CD4-positive, alpha-beta memory T cell (primary cell): ENCODE measurements at regions of chr19 and their contacts with region 1.

Region 1: DNA sequence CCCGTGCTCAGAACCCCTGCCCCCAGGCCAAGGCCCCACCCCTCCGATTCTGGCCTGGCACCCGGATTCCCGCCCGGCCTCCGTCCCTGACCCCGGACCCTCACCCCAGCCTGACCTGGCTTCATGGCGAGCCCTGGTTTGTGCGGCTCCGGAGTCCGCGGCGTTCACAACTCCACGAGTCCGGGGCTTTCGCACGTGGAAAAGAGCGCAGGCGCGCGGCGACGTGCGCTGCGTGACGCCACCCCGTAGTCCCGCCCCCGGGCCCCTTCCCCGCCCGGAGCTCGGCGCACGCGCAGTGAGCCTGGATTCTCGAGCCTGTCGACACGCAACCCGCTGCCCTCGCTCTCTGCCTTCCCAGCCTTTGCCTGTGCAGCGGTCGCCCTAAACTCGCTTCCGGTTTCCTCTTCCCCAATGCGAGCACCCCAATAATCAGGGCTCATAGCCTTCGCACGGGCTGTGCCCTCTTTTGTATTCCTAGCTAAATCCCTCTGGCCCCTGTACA is at the start of gene FBL:
- DNase-seq: peak; percentile 94 to 98 (median 96)
- H3K4me3 ChIP-seq: peak within 1 kb of the TSS; percentile 63 to 78
- H3K4me3 Mint-ChIP-seq: peak within 1 kb of the TSS; percentile 88 to 93 (median 92)
- H3K27ac ChIP-seq: peak within 1 kb of the TSS; percentile 86
- H3K27ac Mint-ChIP-seq: peak within 1 kb of the TSS; percentile 92 to 98 (median 97)
- H3K4me1 ChIP-seq: peaks cover 49% of the 10 kb centered on the region
- H3K4me1 Mint-ChIP-seq: peaks cover 38 to 62% (median 47%) of the 10 kb centered on the region in 4 donors
- H3K27me3 ChIP-seq: no peaks in the 10 kb centered on the region
- H3K27me3 Mint-ChIP-seq: no peaks in the 10 kb centered on the region
- total RNA-seq, gene FBL: 282 to 295 TPM

Region 2: DNA sequence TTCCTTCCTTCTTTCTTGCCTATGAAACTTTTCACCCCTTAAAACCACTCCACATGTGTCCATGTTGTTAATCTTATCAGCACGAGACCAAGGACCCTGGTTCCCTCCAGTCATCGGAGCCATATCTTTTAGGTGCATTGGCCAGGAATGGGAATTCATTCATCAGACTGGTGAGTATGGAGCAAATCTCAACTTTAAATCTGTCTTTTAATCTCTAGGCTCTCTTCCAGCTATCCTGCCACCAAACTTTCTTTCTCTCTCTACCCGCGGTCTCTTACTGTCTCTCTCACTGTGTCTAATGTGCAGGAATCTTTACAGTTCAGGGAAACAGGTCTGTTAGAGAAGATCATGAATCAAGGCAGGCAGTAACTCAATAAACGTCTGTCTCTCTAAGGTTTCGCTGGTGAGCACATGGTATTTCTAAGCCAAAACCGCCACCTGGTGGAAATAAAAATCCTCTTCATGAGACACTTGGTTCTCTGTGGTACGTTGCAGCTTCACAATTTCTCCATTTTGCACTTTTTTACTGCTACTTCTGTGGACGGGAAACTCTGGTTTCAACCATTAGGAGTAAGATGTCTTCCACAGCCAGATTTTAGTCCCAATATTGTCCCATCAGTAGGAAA is 174.4 kb before region 1 on chr19:
- CTCF ChIA-PET with region 1: interaction called, 6 read pairs
- POLR2A ChIA-PET with region 1: no interaction called
- intact Hi-C with region 1: loop called (anchors 5 kb)
- DNase-seq: peak; percentile 50 to 60 (median 59)
- H3K4me3 ChIP-seq: no peak overlapping the region
- H3K4me3 Mint-ChIP-seq: peak overlapping the region in 3 of 8 donors; percentile 5 to 20 (median 17)
- H3K27ac ChIP-seq: no peak overlapping the region
- H3K27ac Mint-ChIP-seq: peak overlapping the region in 1 of 7 donors; percentile 9
- H3K4me1 ChIP-seq: peaks cover 24% of the 10 kb centered on the region
- H3K4me1 Mint-ChIP-seq: peaks cover 5 to 33% (median 19%) of the 10 kb centered on the region in 4 donors
- H3K27me3 ChIP-seq: no peaks in the 10 kb centered on the region
- H3K27me3 Mint-ChIP-seq: peaks cover 6 to 10% of the 10 kb centered on the region in 2 donors

Region 3: GRCh38 chr19:39765091-39766076 is 80.8 kb before region 1 on chr19:
- CTCF ChIA-PET with region 1: interaction called, 43 read pairs
- POLR2A ChIA-PET with region 1: no interaction called
- intact Hi-C with region 1: loop called (anchors 1 kb)
- DNase-seq: peak in 3 of 5 donors; percentile 14 to 20 (median 16)
- H3K4me3 ChIP-seq: no peak overlapping the region
- H3K4me3 Mint-ChIP-seq: no peak overlapping the region
- H3K27ac ChIP-seq: no peak overlapping the region
- H3K27ac Mint-ChIP-seq: no peak overlapping the region
- H3K4me1 ChIP-seq: no peaks in the 10 kb centered on the region
- H3K4me1 Mint-ChIP-seq: peaks cover 0 to 1% (median 0%) of the 10 kb centered on the region in 4 donors
- H3K27me3 ChIP-seq: no peaks in the 10 kb centered on the region
- H3K27me3 Mint-ChIP-seq: peaks cover under 1 to 1% of the 10 kb centered on the region in 2 donors

Region 4: DNA sequence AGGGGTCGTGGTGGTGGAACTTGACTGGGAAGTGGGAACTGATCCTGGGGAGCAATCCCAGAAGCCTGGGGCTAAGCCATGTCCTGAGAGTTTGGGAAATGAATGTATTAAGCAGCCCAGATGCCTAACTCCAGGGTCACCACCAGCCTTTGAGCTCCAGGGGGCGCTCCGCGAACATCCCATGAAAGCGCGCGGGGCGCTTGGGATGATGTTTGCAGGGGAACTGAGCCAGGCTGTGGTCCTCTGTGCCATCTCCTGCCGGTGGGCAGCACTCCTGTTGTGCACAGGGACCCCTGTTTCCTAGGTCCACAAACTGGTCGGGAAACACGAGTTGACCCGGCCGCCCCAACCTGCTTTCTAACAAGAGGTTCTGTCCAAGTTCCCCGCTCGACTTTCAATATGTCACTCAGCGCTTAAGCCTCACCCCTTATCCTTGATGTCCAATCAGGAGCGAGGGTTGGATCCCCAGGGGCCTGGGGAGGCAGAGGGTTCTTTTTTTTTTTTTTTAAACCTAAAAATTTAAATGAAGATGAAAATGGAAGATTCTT is 53.2 kb before region 1 on chr19:
- CTCF ChIA-PET with region 1: interaction called, 168 read pairs
- POLR2A ChIA-PET with region 1: interaction called, 16 read pairs
- intact Hi-C with region 1: loop called (anchors 1 kb)
- DNase-seq: peak; percentile 67 to 78 (median 69)
- H3K4me3 ChIP-seq: peak overlapping the region; percentile 63 to 73
- H3K4me3 Mint-ChIP-seq: peak overlapping the region; percentile 71 to 85 (median 80)
- H3K27ac ChIP-seq: no peak overlapping the region
- H3K27ac Mint-ChIP-seq: peak overlapping the region in 2 of 7 donors; percentile 19 to 69
- H3K4me1 ChIP-seq: peaks cover 3% of the 10 kb centered on the region
- H3K4me1 Mint-ChIP-seq: peaks cover 0 to 5% (median 2%) of the 10 kb centered on the region in 4 donors
- H3K27me3 ChIP-seq: no peaks in the 10 kb centered on the region
- H3K27me3 Mint-ChIP-seq: peaks cover 0 to 9% of the 10 kb centered on the region in 2 donors

Region 5: DNA sequence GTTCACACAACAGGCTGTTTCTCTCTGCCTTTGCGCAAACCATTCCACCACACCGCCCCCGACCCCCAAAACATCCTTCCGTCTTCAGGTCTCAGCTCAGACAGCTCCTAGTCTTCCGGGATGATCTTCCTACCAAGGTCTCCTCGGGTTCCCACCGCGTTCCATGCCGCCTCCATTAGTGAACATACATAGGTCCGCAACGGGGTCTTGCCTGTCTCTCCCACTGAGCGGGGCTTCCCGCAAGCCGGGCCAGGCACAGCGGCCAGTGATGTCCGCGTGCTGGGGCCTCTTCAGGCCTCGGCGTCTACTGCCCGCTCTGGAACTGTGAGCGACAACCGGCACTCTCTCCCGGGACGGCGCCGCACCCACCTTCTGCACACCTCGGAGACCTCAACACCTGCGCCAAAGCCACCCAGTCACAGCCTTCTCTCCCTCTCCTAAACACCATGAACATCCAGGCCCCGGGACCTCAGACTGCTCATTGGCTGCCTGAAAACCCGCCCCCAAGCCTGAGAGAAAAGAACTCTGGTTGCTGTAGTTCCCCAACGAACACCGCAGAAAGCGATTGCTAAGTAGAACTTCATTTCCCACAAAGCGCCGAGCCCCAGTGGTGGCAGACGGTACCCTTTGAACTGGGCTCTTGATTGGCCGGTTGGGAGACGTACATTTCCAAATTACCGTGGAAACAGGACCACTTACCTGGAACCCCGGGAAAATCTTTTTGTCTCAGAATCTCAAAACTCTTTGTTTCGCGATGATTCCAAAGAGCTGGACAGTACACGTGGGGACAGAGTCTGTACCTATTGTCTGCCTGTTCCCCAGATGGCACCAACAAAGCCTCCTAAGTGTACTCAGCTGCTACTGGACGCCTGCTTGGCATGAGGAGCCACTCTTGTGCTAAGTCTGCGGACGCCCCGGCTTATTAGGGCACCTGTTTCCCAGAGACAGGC is 21.8 kb before region 1 on chr19:
- CTCF ChIA-PET with region 1: interaction called, 13 read pairs
- POLR2A ChIA-PET with region 1: interaction called, 9 read pairs
- intact Hi-C with region 1: loop called (anchors 1 kb)
- DNase-seq: peak; percentile 86 to 95 (median 88)
- H3K4me3 ChIP-seq: peak overlapping the region; percentile 67 to 85
- H3K4me3 Mint-ChIP-seq: no peak overlapping the region
- H3K27ac ChIP-seq: peak overlapping the region; percentile 60
- H3K27ac Mint-ChIP-seq: no peak overlapping the region
- H3K4me1 ChIP-seq: peaks cover 24% of the 10 kb centered on the region
- H3K4me1 Mint-ChIP-seq: peaks cover 7 to 16% (median 8%) of the 10 kb centered on the region in 4 donors
- H3K27me3 ChIP-seq: no peaks in the 10 kb centered on the region
- H3K27me3 Mint-ChIP-seq: no peaks in the 10 kb centered on the region

Region 6: GRCh38 chr19:39833464-39834286 is 12.6 kb before region 1 on chr19 and contains the start of gene DYRK1B:
- CTCF ChIA-PET with region 1: interaction called, 61 read pairs
- POLR2A ChIA-PET with region 1: interaction called, 96 read pairs
- intact Hi-C with region 1: loop called (anchors 1 kb)
- DNase-seq: peak; percentile 96 to 98 (median 98)
- H3K4me3 ChIP-seq: peak within 1 kb of the TSS; percentile 81 to 98
- H3K4me3 Mint-ChIP-seq: peak within 1 kb of the TSS; percentile 79 to 90 (median 86)
- H3K27ac ChIP-seq: peak within 1 kb of the TSS; percentile 91
- H3K27ac Mint-ChIP-seq: peak within 1 kb of the TSS; percentile 77 to 99 (median 96)
- H3K4me1 ChIP-seq: peaks cover 30% of the 10 kb centered on the region
- H3K4me1 Mint-ChIP-seq: peaks cover 24 to 39% (median 31%) of the 10 kb centered on the region in 4 donors
- H3K27me3 ChIP-seq: no peaks in the 10 kb centered on the region
- H3K27me3 Mint-ChIP-seq: no peaks in the 10 kb centered on the region
- total RNA-seq, gene DYRK1B: 28.4 to 30.9 TPM

Region 7: GRCh38 chr19:39996811-39997594 is 150.8 kb after region 1 on chr19 and contains the start of gene ZNF546:
- CTCF ChIA-PET with region 1: no interaction called
- POLR2A ChIA-PET with region 1: interaction called, 12 read pairs
- intact Hi-C with region 1: no loop called
- DNase-seq: peak; percentile 87 to 93 (median 90)
- H3K4me3 ChIP-seq: peak within 1 kb of the TSS; percentile 98 to 99
- H3K4me3 Mint-ChIP-seq: peak within 1 kb of the TSS; percentile 93 to 100 (median 99)
- H3K27ac ChIP-seq: peak within 1 kb of the TSS; percentile 82
- H3K27ac Mint-ChIP-seq: peak within 1 kb of the TSS; percentile 79 to 98 (median 96)
- H3K4me1 ChIP-seq: peaks cover 19% of the 10 kb centered on the region
- H3K4me1 Mint-ChIP-seq: peaks cover 27 to 53% (median 37%) of the 10 kb centered on the region in 4 donors
- H3K27me3 ChIP-seq: no peaks in the 10 kb centered on the region
- H3K27me3 Mint-ChIP-seq: no peaks in the 10 kb centered on the region
- total RNA-seq, gene ZNF546: 17.5 to 18.4 TPM

Region 8: GRCh38 chr19:40674291-40674690 is 828.1 kb after region 1 on chr19:
- CTCF ChIA-PET with region 1: no interaction called
- POLR2A ChIA-PET with region 1: no interaction called
- intact Hi-C with region 1: no loop called
- DNase-seq: no peak
- H3K4me3 ChIP-seq: no peak overlapping the region
- H3K4me3 Mint-ChIP-seq: peak overlapping the region in 1 of 8 donors; percentile 24
- H3K27ac ChIP-seq: no peak overlapping the region
- H3K27ac Mint-ChIP-seq: no peak overlapping the region
- H3K4me1 ChIP-seq: no peaks in the 10 kb centered on the region
- H3K4me1 Mint-ChIP-seq: peaks cover 0 to 1% (median 0%) of the 10 kb centered on the region in 4 donors
- H3K27me3 ChIP-seq: no peaks in the 10 kb centered on the region
- H3K27me3 Mint-ChIP-seq: no peaks in the 10 kb centered on the region